HepG2 (cell line): ENCODE measurements at regions of chr7 and their contacts with region 1.

Region 1: DNA sequence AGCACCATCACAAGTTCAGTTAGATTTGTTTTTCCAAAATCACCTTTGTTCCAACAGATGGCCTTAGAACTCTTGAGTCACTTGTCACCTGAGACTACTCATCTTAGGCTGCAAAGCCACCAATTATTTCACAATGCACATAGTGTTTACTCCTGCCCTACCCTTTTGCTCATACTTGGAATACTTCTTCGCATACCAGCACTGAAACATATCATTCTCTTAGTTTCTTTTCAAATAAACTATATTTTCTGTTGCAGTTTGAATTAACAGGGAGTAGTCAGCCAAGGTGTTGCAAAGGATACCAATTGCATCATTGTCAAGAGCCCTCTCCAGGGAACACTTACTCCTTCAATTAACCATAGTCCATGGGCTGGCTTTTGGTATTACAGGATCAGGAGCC is 71.0 kb downstream of the CASD1 start:
- DNase-seq: peak; percentile 93
- ATAC-seq: peak; percentile 96
- H3K4me3 ChIP-seq: peak overlapping the region in 1 of 3 experiments; percentile 19; a peak in 1 of 6 replicates
- H3K27ac ChIP-seq: peak overlapping the region; percentile 57
- H3K4me1 ChIP-seq: peaks cover 61% of the 10 kb centered on the region
- H3K27me3 ChIP-seq: no peaks in the 10 kb centered on the region
- CTCF ChIP-seq: no peak
- EP300 ChIP-seq: peak; percentile 63 to 90; a peak in 3 of 4 replicates
- POLR2A ChIP-seq: no peak
- RAD21 ChIP-seq: 0 out of 2 replicates have a peak, but pooled peaks have one; percentile 9

Region 2: DNA sequence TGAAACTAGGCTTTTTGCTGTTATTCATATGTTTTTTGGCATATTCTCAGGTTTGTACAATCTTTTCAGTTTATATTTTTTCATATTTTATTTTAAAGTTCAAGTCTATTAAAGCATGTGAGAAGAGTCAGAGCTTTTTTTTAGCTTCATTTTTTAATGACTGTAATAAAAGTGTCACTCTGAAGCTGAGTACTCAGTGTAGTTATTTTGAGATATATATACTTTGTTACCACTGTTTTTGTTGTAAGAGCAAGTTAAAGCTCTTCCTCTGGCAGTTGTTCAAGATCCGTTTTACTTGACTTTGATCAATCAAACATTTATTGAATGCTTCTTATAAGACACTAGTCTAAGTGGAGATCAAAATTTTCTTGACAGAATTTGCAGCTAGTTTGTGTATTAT is 33.5 kb before region 1 on chr7:
- CTCF ChIA-PET with region 1: no interaction called
- POLR2A ChIA-PET with region 1: no interaction called
- in situ Hi-C with region 1: no loop called
- intact Hi-C with region 1: no loop called
- DNase-seq: no peak
- ATAC-seq: no peak
- H3K4me3 ChIP-seq: no peak overlapping the region
- H3K27ac ChIP-seq: no peak overlapping the region
- H3K4me1 ChIP-seq: no peaks in the 10 kb centered on the region
- H3K27me3 ChIP-seq: no peaks in the 10 kb centered on the region
- CTCF ChIP-seq: no peak
- EP300 ChIP-seq: no peak
- POLR2A ChIP-seq: no peak
- RAD21 ChIP-seq: no peak

Region 3: GRCh38 chr7:94620703-94621118 is 40.1 kb after region 1 on chr7:
- CTCF ChIA-PET with region 1: no interaction called
- POLR2A ChIA-PET with region 1: no interaction called
- in situ Hi-C with region 1: no loop called
- intact Hi-C with region 1: loop called (anchors 5 kb)
- DNase-seq: peak; percentile 82
- ATAC-seq: peak; percentile 94
- H3K4me3 ChIP-seq: no peak overlapping the region
- H3K27ac ChIP-seq: peak overlapping the region; percentile 30
- H3K4me1 ChIP-seq: peaks cover 48% of the 10 kb centered on the region
- H3K27me3 ChIP-seq: no peaks in the 10 kb centered on the region
- CTCF ChIP-seq: no peak
- EP300 ChIP-seq: peak in 1 of 2 experiments; percentile 61; a peak in 1 of 4 replicates
- POLR2A ChIP-seq: no peak
- RAD21 ChIP-seq: no peak

Region 4: DNA sequence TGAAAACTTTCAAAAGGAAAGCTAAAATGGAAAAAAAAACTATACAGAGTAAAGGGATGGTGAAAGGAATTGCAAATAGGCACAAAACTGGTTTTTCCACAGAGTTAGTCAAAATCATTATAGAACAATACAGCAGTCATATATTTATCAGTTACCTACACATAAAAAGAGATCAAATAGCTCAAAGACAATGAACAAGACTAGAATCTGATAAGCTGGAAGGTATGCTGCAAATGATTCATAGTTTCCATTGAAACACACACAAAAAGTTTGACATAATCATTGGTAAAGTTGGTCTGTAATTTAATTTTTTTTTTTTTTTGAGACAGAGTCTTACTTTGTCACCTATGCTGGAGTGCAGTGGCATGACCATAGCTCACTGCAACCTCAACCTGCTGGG is 167.8 kb after region 1 on chr7:
- CTCF ChIA-PET with region 1: no interaction called
- POLR2A ChIA-PET with region 1: no interaction called
- in situ Hi-C with region 1: no loop called
- intact Hi-C with region 1: no loop called
- DNase-seq: no peak
- ATAC-seq: no peak
- H3K4me3 ChIP-seq: no peak overlapping the region
- H3K27ac ChIP-seq: no peak overlapping the region
- H3K4me1 ChIP-seq: 0 out of 2 replicates have a peak, but pooled peaks cover 2% of the 10 kb centered on the region
- H3K27me3 ChIP-seq: peaks cover 1 to 6% of the 10 kb centered on the region in 2 experiments; a peak in 2 of 5 replicates
- CTCF ChIP-seq: no peak
- EP300 ChIP-seq: no peak
- POLR2A ChIP-seq: no peak
- RAD21 ChIP-seq: no peak

Region 5: GRCh38 chr7:95045236-95045923 is 464.8 kb after region 1 on chr7:
- CTCF ChIA-PET with region 1: no interaction called
- POLR2A ChIA-PET with region 1: no interaction called
- in situ Hi-C with region 1: no loop called
- intact Hi-C with region 1: no loop called
- DNase-seq: peak; percentile 57
- ATAC-seq: peak; percentile 99
- H3K4me3 ChIP-seq: no peak overlapping the region
- H3K27ac ChIP-seq: no peak overlapping the region
- H3K4me1 ChIP-seq: 0 out of 2 replicates have a peak, but pooled peaks cover 11% of the 10 kb centered on the region
- H3K27me3 ChIP-seq: no peaks in the 10 kb centered on the region
- CTCF ChIP-seq: peak; percentile 84
- EP300 ChIP-seq: no peak
- POLR2A ChIP-seq: no peak
- RAD21 ChIP-seq: peak; percentile 85